ENCODE measurements at regions of chr19 and their contacts with region 1.

Region 1: DNA sequence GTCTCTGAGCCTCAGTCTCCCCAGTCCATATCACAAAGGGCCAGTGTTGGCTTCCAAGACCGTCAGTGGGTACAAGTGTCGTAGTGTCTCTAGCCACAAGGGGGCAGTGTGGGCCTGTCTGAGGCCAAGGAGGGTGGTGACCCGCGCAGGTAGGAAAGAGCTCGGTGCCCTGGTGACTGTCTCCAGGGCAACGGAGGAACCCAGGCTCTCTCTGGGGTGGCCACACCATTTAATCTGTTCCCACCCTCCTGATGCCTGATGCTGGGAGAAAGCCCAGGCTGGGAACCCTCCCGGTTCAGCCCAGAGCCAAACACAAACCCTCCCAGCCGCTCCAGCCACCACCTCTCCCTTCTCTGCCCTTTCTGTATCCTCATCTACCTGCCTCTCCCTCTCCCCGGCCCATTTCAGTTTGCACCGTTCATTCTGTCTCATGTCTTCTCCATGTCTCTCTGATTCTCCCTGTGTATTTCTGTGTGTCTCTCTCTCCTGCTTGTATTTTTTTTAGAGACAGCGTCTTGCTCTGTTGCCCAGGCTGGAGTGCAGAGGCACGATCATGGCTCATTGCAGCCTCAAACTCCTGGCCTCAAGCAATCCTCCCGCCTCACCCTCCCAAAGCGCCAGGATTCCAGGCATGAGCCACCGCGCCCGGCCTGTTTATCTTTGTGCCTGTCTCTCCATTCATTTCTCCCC is 17.5 kb upstream of the MEIS3 start:
- DNase-seq: peak; percentile 53 to 91 (median 78)
- ATAC-seq: peak; percentile 89 to 94 (median 93)
- H3K4me3 ChIP-seq: no peak overlapping the region
- H3K4me3 Mint-ChIP-seq: peak overlapping the region in 2 of 3 donors; percentile 9 to 17
- H3K27ac ChIP-seq: no peak overlapping the region
- H3K27ac Mint-ChIP-seq: no peak overlapping the region
- H3K4me1 ChIP-seq: peaks cover 0 to 23% of the 10 kb centered on the region in 2 experiments
- H3K4me1 Mint-ChIP-seq: peaks cover 9 to 23% (median 16%) of the 10 kb centered on the region in 3 donors
- H3K27me3 ChIP-seq: peaks cover 2 to 83% of the 10 kb centered on the region in 2 experiments
- H3K27me3 Mint-ChIP-seq: peaks cover 40 to 51% of the 10 kb centered on the region in 2 donors

Region 2: DNA sequence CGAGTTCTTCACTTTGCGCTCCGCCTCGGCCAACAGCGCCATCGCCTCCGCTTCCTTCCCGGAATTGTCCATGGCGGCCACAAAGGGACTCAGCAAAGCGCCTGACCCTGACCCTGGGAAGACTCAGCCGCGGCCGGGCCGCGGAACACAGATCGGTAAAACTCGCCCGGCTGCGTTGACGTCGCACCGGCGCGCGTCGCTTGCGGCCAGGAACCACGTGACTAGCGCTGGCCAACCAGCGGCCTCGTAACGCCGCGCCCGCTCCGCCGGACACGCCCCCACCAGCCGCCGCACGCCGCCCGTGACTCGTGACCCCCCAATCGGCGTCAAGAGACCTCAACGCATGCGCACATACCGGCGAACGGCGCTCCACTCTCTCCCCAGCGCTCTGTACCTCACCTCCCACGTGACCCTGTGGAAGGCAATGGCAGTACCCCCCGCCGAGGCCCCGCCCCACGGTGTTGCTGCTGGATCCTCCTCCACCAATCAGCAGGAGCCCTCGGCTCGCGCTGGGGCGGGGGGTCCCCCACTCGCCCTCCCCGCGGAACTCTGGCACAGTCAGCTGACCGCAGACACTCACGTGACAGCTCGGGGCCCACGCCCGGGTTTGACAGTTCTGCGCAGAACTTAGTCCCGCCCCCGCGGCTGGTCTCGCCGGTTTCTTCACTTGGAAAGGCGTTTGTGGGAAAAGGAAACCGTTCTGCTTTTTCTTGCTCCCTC is 78.2 kb after region 1 on chr19 and contains the start of gene NAPA:
- CTCF ChIA-PET with region 1: interaction called in 1 of 2 experiments, 10 read pairs
- POLR2A ChIA-PET with region 1: no interaction called
- DNase-seq: peak; percentile 100
- ATAC-seq: peak; percentile 90 to 95 (median 92)
- H3K4me3 ChIP-seq: peak within 1 kb of the TSS; percentile 94 to 99
- H3K4me3 Mint-ChIP-seq: peak within 1 kb of the TSS; percentile 99
- H3K27ac ChIP-seq: peak within 1 kb of the TSS; percentile 92
- H3K27ac Mint-ChIP-seq: peak within 1 kb of the TSS; percentile 97 to 98
- H3K4me1 ChIP-seq: peaks cover 39 to 79% of the 10 kb centered on the region in 2 experiments
- H3K4me1 Mint-ChIP-seq: peaks cover 83 to 93% (median 90%) of the 10 kb centered on the region in 3 donors
- H3K27me3 ChIP-seq: no peaks in the 10 kb centered on the region
- H3K27me3 Mint-ChIP-seq: no peaks in the 10 kb centered on the region
- total RNA-seq, gene NAPA: 81.1 to 119 (median 86.7) TPM

Region 3: GRCh38 chr19:47707135-47707925 is 270.5 kb after region 1 on chr19:
- CTCF ChIA-PET with region 1: interaction called, 7 to 26 read pairs
- POLR2A ChIA-PET with region 1: no interaction called
- DNase-seq: peak; percentile 30 to 83 (median 64)
- ATAC-seq: peak; percentile 81 to 88 (median 86)
- H3K4me3 ChIP-seq: no peak overlapping the region
- H3K4me3 Mint-ChIP-seq: no peak overlapping the region
- H3K27ac ChIP-seq: no peak overlapping the region
- H3K27ac Mint-ChIP-seq: no peak overlapping the region
- H3K4me1 ChIP-seq: peaks cover 0 to 5% of the 10 kb centered on the region in 2 experiments
- H3K4me1 Mint-ChIP-seq: peaks cover 3 to 7% (median 5%) of the 10 kb centered on the region in 3 donors
- H3K27me3 ChIP-seq: peaks cover 0 to 48% of the 10 kb centered on the region in 2 experiments
- H3K27me3 Mint-ChIP-seq: peaks cover 22% of the 10 kb centered on the region in 2 donors

Measured in T-cell (primary cell).